Activated T-helper 2 cell treated with anti-CD3 and anti-CD28 coated beads, Interferon-gamma antibody, Interleukin-2, Interleukin-4, amounts not matched to agents 10 μg/mL and 5 μg/mL and 100 μg/mL, durations not matched to agents 14 hours and 24 hours and 36 hours (primary cell): ENCODE measurements at regions of chr15 and their contacts with region 1.

Region 1: GRCh38 chr15:75842722-75843551 is at the start of gene UBE2Q2:
- DNase-seq: peak; percentile 70
- H3K4me3 Mint-ChIP-seq: peak within 1 kb of the TSS; percentile 94
- H3K27ac Mint-ChIP-seq: peak within 1 kb of the TSS; percentile 88
- H3K4me1 Mint-ChIP-seq: peaks cover 30% of the 10 kb centered on the region
- H3K27me3 Mint-ChIP-seq: peaks cover 10% of the 10 kb centered on the region
- total RNA-seq, gene UBE2Q2: 18.9 and 21.1 TPM in 2 replicates

Region 2: GRCh38 chr15:75891895-75892294 is 49.0 kb after region 1 on chr15:
- intact Hi-C with region 1: no loop called
- DNase-seq: no peak
- H3K4me3 Mint-ChIP-seq: no peak overlapping the region
- H3K27ac Mint-ChIP-seq: peak overlapping the region; percentile 35
- H3K4me1 Mint-ChIP-seq: peaks cover 12% of the 10 kb centered on the region
- H3K27me3 Mint-ChIP-seq: no peaks in the 10 kb centered on the region

Region 3: GRCh38 chr15:75903331-75904239 is 60.6 kb after region 1 on chr15 and contains the start of gene FBXO22:
- intact Hi-C with region 1: loop called (anchors 5 kb)
- DNase-seq: peak; percentile 89
- H3K4me3 Mint-ChIP-seq: peak within 1 kb of the TSS; percentile 99
- H3K27ac Mint-ChIP-seq: peak within 1 kb of the TSS; percentile 97
- H3K4me1 Mint-ChIP-seq: peaks cover 27% of the 10 kb centered on the region
- H3K27me3 Mint-ChIP-seq: no peaks in the 10 kb centered on the region
- total RNA-seq, gene FBXO22: 47.0 and 48.0 TPM in 2 replicates